Endothelial cell of umbilical vein (primary cell): ENCODE measurements at regions of chr1 and their contacts with region 1.

Region 1: DNA sequence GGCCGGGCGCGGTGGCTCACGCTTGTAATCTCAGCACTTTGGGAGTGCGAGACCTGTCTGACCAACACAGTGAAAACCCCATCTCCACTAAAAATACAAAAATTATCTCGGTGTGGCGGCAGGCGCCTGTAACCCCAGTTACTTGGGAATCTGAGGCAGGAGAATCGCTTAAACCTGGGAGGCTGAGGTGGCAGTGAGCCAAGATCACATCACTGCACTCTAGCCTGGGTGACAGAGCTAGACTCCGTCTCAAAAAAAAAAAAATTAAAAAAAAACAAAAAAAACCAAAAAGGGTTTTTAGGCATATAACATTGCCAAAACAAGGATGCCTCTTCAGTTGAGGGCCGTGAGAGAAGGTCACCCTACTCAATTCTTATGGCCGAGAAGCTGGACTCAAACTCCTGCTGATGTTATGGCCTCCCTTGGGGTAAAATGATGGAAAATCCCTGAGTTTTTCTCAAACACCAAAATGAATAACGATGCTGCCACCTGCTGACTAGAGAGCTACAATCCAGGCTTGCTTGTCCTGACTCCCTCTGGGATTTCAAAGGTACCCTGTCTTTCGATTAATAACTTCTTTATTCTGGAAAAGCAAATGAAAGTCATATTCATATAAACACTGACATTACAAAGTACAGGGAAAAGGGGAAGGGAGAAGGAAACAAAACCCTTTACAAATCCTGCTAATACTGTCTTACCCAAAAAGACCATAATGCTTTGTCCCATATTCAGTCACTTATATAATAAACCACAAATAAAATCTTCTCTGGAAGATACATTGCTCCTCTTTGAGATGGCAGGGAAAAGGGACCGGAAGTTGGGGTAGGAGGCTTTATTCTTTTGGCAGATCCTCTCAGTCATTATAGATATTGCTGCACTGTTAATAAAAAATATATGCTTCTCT is 10.7 kb downstream of the RAB42 start:
- DNase-seq: peak; percentile 72
- H3K4me3 ChIP-seq: no peak overlapping the region
- H3K27ac ChIP-seq: no peak overlapping the region
- H3K4me1 ChIP-seq: peaks cover 8% of the 10 kb centered on the region
- H3K27me3 ChIP-seq: no peaks in the 10 kb centered on the region
- CTCF ChIP-seq: peak; percentile 63 to 64
- POLR2A ChIP-seq: no peak

Region 2: GRCh38 chr1:28259307-28260167 is 343.3 kb before region 1 on chr1 and contains the start of gene SESN2:
- CTCF ChIA-PET with region 1: no interaction called
- POLR2A ChIA-PET with region 1: no interaction called
- dilution Hi-C with region 1: loop called (anchors 25 kb)
- intact Hi-C with region 1: no loop called
- DNase-seq: peak; percentile 98
- H3K4me3 ChIP-seq: peak within 1 kb of the TSS; percentile 77 to 98 (median 80)
- H3K27ac ChIP-seq: peak within 1 kb of the TSS; percentile 34
- H3K4me1 ChIP-seq: peaks cover 12% of the 10 kb centered on the region
- H3K27me3 ChIP-seq: peaks cover 0 to 3% of the 10 kb centered on the region in 2 experiments
- CTCF ChIP-seq: no peak
- POLR2A ChIP-seq: peak; percentile 98
- total RNA-seq, gene SESN2: 13.1 and 13.2 TPM in 2 replicates

Region 3: DNA sequence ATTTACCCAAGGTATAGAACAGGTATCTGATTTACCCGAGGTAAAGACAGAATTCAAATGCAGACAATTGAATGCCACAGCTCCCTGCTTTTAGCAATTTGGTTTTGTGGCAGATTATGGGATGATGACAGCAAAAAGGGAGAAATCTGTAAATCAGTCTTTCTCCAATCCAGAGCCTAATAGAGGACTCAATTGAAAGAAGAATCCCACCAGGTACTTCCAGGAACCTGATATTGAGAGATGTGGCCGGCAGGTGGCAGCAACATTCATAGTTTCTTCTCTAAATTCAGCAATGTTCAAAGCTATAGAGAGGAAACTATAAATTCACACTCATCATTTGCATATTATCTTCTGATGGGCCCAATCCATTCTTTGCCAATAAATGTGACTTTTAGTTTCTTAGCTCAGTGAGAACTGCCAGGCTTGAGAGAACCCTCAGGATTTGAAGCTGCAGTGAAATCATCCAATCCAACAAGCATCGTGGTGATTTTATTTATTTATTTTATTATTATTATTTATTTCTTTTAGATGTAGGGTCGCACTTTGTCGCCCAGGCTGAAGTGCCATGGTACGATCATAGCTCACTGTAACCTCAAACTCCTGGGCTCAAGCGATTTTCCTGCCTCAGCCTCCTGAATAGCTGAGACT is 243.1 kb before region 1 on chr1:
- CTCF ChIA-PET with region 1: interaction called, 192 read pairs
- POLR2A ChIA-PET with region 1: interaction called, 5 read pairs
- dilution Hi-C with region 1: no loop called
- intact Hi-C with region 1: loop called (anchors 1 kb)
- DNase-seq: peak; percentile 73
- H3K4me3 ChIP-seq: no peak overlapping the region
- H3K27ac ChIP-seq: no peak overlapping the region
- H3K4me1 ChIP-seq: no peaks in the 10 kb centered on the region
- H3K27me3 ChIP-seq: no peaks in the 10 kb centered on the region
- CTCF ChIP-seq: peak; percentile 56 to 64
- POLR2A ChIP-seq: no peak

Region 4: GRCh38 chr1:28378906-28379305 is 223.9 kb before region 1 on chr1:
- CTCF ChIA-PET with region 1: no interaction called
- POLR2A ChIA-PET with region 1: no interaction called
- dilution Hi-C with region 1: no loop called
- intact Hi-C with region 1: no loop called
- DNase-seq: no peak
- H3K4me3 ChIP-seq: no peak overlapping the region
- H3K27ac ChIP-seq: no peak overlapping the region
- H3K4me1 ChIP-seq: no peaks in the 10 kb centered on the region
- H3K27me3 ChIP-seq: no peaks in the 10 kb centered on the region
- CTCF ChIP-seq: no peak
- POLR2A ChIP-seq: no peak

Region 5: GRCh38 chr1:28437934-28438699 is 164.7 kb before region 1 on chr1:
- CTCF ChIA-PET with region 1: no interaction called
- POLR2A ChIA-PET with region 1: no interaction called
- dilution Hi-C with region 1: no loop called
- intact Hi-C with region 1: no loop called
- DNase-seq: peak; percentile 95
- H3K4me3 ChIP-seq: peak overlapping the region; percentile 31 to 72 (median 33)
- H3K27ac ChIP-seq: peak overlapping the region; percentile 49
- H3K4me1 ChIP-seq: peaks cover 27% of the 10 kb centered on the region
- H3K27me3 ChIP-seq: no peaks in the 10 kb centered on the region
- CTCF ChIP-seq: no peak
- POLR2A ChIP-seq: peak; percentile 99

Region 6: DNA sequence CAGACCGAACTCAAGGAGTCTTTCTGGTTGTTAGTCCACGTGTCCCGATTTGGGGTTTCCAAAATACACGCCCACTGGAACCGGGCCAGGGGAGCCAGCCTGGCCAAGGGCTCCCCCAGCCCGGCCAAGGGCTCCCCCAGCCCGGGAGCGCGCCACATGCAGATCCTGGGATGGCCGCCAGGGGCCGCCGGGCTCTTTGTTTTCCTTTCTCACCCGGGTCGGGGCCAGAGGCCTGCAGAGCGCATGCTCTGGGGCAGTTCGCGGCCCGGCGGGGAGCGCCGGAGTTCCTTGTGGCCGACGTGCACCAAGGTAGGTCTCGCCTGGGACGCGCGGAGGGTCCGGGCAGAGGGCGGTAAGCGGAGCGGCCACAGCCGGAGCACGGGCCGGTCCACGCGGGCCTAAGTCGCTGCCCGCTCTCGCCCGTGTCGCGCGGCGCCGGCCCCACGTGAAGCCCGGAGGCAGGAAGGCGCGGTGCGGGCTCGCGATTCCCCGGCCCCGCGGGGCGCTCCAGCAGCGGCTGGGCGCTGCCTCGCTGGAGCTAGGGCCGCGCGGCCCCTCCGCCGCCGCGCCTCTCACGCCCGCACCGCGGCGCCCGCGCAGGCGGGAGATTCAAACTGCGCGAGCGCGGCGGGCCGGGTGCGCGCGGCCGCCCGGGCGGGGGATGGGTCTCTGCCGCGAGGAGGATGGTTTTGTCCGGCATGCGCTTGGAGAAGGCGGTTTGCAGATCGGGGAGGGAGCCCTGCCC is 84.6 kb before region 1 on chr1:
- CTCF ChIA-PET with region 1: interaction called, 53 read pairs
- POLR2A ChIA-PET with region 1: no interaction called
- dilution Hi-C with region 1: no loop called
- intact Hi-C with region 1: loop called (anchors 1 kb)
- DNase-seq: peak; percentile 91
- H3K4me3 ChIP-seq: peak overlapping the region; percentile 52 to 73 (median 57)
- H3K27ac ChIP-seq: peak overlapping the region; percentile 46
- H3K4me1 ChIP-seq: peaks cover 14% of the 10 kb centered on the region
- H3K27me3 ChIP-seq: no peaks in the 10 kb centered on the region
- CTCF ChIP-seq: peak; percentile 94 to 98
- POLR2A ChIP-seq: peak; percentile 87

Region 7: DNA sequence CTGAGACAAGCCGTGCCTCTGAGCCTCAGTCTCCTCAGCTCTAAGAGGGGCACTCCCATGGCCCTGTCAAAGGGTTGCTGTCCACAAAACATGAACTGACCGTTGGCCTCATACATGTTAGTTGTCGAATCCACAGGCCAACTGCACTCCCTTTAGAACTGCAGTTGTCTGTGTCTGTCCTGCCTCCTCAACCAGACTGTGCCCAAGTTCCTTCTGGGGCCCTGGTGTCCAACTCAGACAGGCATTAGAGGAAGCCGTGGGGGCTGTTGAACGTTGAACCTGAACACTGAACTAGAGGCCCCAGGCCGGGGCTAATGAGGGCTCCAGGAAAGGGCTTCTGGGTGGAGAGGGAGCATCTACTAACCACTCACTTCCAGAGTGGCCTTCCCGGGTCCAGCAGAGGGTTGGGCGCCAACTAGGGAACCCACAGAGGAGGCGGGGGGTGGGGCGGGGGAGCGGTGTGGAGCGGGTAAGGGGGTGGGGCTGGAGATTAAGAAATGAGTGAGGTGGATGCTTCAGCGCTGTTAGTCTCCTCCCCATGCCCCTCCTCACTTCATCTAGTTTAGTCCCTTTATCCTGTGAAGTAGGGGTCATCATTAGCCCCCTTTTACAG is 11.0 kb before region 1 on chr1 and contains the start of gene RAB42:
- CTCF ChIA-PET with region 1: interaction called, 10 read pairs
- POLR2A ChIA-PET with region 1: no interaction called
- dilution Hi-C with region 1: no loop called
- intact Hi-C with region 1: no loop called
- DNase-seq: no peak
- H3K4me3 ChIP-seq: peak within 1 kb of the TSS in 2 of 3 experiments; percentile 31 to 37
- H3K27ac ChIP-seq: no peak within 1 kb of the TSS
- H3K4me1 ChIP-seq: peaks cover 3% of the 10 kb centered on the region
- H3K27me3 ChIP-seq: no peaks in the 10 kb centered on the region
- CTCF ChIP-seq: no peak
- POLR2A ChIP-seq: no peak
- total RNA-seq, gene RAB42: 1.2 and 2.0 TPM in 2 replicates